ENCODE measurements at regions of chr6 and their contacts with region 1.

Region 1: DNA sequence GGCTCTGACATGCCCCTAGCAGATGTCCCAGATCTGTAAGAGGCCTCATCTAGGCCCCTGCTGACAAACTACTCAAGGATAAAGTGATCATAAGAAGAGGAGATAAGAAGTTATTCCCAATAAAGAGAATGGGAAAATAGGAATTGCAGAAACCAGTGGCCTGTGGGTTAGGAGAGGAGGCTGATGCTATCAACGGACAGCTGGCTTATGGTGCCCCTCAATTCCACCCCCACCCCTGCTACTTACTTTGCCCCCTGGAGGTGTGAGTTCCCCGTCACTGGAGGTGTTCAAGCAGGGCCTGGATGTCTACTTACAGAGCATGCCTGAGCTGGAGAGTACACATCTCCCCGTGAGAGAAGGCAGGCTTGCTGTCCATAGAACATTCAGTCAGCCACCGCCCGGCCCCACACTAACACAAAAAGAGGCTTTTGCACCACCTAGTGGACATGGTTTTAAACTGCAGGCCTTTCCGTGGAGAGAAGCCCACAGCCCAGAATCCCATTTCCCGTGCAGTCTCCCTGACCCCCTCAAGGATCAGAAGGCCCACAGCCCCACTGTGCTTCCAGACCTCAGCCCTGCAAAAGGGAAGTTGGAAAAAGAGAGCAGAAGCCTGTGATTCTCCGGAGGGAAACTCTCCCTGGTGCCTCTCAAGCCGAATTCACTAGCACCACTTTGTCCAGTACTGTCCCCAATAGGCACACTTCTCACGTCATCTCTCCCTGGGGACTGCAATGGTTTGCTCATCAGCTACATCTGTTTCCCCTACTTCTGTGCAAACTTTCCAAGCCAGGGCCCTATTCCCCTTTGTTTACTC is 23.8 kb upstream of the BNIP5 start:
- DNase-seq: no peak
- H3K4me3 ChIP-seq: no peak overlapping the region
- H3K27me3 ChIP-seq: peaks cover 1% of the 10 kb centered on the region; the same call in 1 of the 2 replicates
- CTCF ChIP-seq: peak; percentile 83

Region 2: GRCh38 chr6:36123257-36124139 is 236.9 kb before region 1 on chr6:
- CTCF ChIA-PET with region 1: interaction called, 11 read pairs
- POLR2A ChIA-PET with region 1: no interaction called
- DNase-seq: no peak
- H3K4me3 ChIP-seq: no peak overlapping the region
- H3K27me3 ChIP-seq: no peaks in the 10 kb centered on the region
- CTCF ChIP-seq: peak; percentile 82